Left colon (tissue), 2 donors: ENCODE measurements at regions of chr4 and their contacts with region 1.

Region 1: GRCh38 chr4:64533637-64534036 is 124.4 kb upstream of the TECRL start:
- DNase-seq: no peak
- ATAC-seq: no peak

Region 2: DNA sequence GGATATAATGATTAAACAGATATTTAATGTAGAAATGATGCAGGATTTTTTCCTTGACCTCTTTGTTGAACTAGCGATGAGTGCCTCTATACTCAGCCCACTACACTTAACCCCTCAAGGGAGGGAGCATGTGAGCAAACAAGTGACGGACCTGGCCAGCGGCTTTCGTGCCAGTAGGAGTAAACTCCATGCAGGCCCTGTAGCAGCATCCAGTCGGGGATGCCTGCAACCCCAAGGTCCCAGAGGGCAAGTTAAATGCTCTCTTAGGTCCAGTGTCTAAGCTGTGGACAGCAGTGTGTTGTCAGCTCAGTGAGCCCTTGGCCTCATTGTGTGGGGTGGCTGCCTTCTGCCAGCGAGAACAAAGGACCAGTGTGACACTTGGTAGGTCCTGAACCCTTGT is 833.1 kb before region 1 on chr4:
- intact Hi-C with region 1: no loop called
- DNase-seq: no peak
- ATAC-seq: no peak

Region 3: GRCh38 chr4:64163051-64163450 is 370.6 kb before region 1 on chr4:
- intact Hi-C with region 1: loop called in 1 of 2 experiments (anchors 5 kb)
- DNase-seq: no peak
- ATAC-seq: no peak